ENCODE measurements at regions of chr3 and their contacts with region 1.

Region 1: GRCh38 chr3:147191795-147192385 is 214.5 kb downstream of the ZIC4 start:
- DNase-seq: peak; percentile 82
- H3K4me3 ChIP-seq: no peak overlapping the region
- H3K27ac ChIP-seq: no peak overlapping the region
- H3K4me1 ChIP-seq: no peaks in the 10 kb centered on the region
- H3K27me3 ChIP-seq: no peaks in the 10 kb centered on the region
- CTCF ChIP-seq: peak; percentile 67 to 71
- POLR2A ChIP-seq: no peak

Region 2: GRCh38 chr3:146589899-146590508 is 601.9 kb before region 1 on chr3:
- CTCF ChIA-PET with region 1: no interaction called
- POLR2A ChIA-PET with region 1: no interaction called
- dilution Hi-C with region 1: no loop called
- intact Hi-C with region 1: loop called (anchors 2 kb)
- DNase-seq: peak; percentile 67
- H3K4me3 ChIP-seq: no peak overlapping the region
- H3K27ac ChIP-seq: no peak overlapping the region
- H3K4me1 ChIP-seq: no peaks in the 10 kb centered on the region
- H3K27me3 ChIP-seq: no peaks in the 10 kb centered on the region
- CTCF ChIP-seq: peak; percentile 23 to 26
- POLR2A ChIP-seq: no peak

Region 3: DNA sequence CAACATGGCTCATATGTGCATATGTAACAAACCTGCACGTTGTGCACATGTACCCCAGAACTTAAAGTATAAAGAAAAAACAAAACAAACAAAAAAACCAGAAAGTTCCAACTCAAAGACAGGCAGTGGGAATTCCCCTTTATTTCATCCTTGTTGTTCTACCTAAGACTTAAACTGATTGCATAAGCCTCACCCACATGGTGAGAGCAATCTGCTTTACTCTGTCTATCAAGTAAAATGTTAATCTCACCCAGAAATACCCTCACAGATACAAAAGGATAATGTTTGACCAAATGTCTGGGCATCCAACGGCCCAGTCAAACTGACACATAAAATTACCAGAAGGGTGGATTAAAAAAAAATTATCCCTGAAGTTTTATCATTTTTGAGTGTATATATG is 395.8 kb before region 1 on chr3:
- CTCF ChIA-PET with region 1: no interaction called
- POLR2A ChIA-PET with region 1: no interaction called
- dilution Hi-C with region 1: no loop called
- intact Hi-C with region 1: no loop called
- DNase-seq: no peak
- H3K4me3 ChIP-seq: no peak overlapping the region
- H3K27ac ChIP-seq: no peak overlapping the region
- H3K4me1 ChIP-seq: no peaks in the 10 kb centered on the region
- H3K27me3 ChIP-seq: no peaks in the 10 kb centered on the region
- CTCF ChIP-seq: no peak
- POLR2A ChIP-seq: no peak

Region 4: DNA sequence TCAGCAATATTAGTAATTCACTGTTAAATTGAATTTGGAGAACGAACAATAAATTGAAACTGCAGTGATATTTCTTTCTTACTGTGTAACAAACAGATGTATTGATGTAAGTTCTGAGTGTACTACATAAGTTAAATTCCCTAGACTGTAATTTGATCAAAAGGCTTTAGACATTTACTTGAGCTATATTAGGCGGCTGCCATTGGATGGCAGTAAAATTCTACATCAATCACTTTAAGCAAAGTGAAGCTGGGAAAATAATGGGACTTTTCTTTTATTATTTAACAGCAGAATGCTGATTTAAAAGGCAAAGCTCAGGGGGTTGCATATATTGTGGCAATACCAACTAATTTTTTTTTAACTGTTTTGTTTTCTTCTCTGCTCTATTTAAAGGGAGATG is 374.2 kb before region 1 on chr3:
- CTCF ChIA-PET with region 1: interaction called, 71 read pairs
- POLR2A ChIA-PET with region 1: no interaction called
- dilution Hi-C with region 1: no loop called
- intact Hi-C with region 1: loop called (anchors 1 kb)
- DNase-seq: peak; percentile 43
- H3K4me3 ChIP-seq: no peak overlapping the region
- H3K27ac ChIP-seq: no peak overlapping the region
- H3K4me1 ChIP-seq: no peaks in the 10 kb centered on the region
- H3K27me3 ChIP-seq: no peaks in the 10 kb centered on the region
- CTCF ChIP-seq: peak in 1 of 2 donors; percentile 31
- POLR2A ChIP-seq: no peak

Region 5: DNA sequence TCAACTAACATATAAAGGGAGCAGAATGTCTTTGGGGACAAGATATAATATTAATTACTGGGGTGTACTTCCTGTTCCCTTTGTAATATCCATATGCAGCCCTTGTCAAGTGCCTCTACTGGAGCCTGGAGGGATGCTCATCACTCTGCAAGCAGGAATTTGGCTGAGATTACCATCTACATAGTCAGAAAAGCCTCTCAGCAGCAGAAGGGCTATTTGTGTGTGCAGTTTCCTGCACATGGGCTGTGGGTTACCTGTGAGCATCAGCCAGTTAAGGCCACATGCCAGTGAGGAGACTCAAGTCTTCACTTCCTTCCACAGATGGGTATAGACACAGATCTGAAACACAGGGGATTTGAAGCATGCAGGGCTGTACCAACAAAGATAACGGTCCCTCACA is 308.6 kb before region 1 on chr3:
- CTCF ChIA-PET with region 1: no interaction called
- POLR2A ChIA-PET with region 1: no interaction called
- dilution Hi-C with region 1: no loop called
- intact Hi-C with region 1: no loop called
- DNase-seq: no peak
- H3K4me3 ChIP-seq: no peak overlapping the region
- H3K27ac ChIP-seq: no peak overlapping the region
- H3K4me1 ChIP-seq: no peaks in the 10 kb centered on the region
- H3K27me3 ChIP-seq: no peaks in the 10 kb centered on the region
- CTCF ChIP-seq: no peak
- POLR2A ChIP-seq: no peak

Region 6: GRCh38 chr3:147654827-147655226 is 462.9 kb after region 1 on chr3:
- CTCF ChIA-PET with region 1: no interaction called
- POLR2A ChIA-PET with region 1: no interaction called
- dilution Hi-C with region 1: no loop called
- intact Hi-C with region 1: no loop called
- DNase-seq: no peak
- H3K4me3 ChIP-seq: no peak overlapping the region
- H3K27ac ChIP-seq: no peak overlapping the region
- H3K4me1 ChIP-seq: no peaks in the 10 kb centered on the region
- H3K27me3 ChIP-seq: no peaks in the 10 kb centered on the region
- CTCF ChIP-seq: no peak
- POLR2A ChIP-seq: no peak